ENCODE measurements at regions of chr1 and their contacts with region 1.

Region 1: DNA sequence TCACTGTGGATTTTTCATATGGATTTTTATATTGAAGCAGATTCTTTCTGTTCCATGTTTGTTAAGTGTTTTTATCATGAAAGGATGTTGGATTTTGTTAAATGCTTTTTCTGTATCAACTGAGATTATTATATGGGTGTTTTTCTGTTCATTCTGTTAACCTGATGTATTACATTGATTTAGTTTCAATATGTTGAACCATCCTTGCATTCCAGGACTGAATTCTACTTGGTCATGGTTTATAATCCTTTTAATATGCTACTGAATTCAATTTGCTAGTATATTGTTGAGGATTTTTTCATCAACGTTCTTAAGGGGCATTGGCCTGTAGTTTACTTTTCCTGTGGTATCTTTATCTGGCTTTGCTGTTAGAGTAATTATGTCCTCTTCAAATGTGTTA is 55.8 kb downstream of the CCDC30 start:
- DNase-seq: no peak
- H3K4me3 ChIP-seq: no peak overlapping the region
- H3K27ac ChIP-seq: no peak overlapping the region
- H3K4me1 ChIP-seq: no peaks in the 10 kb centered on the region
- H3K27me3 ChIP-seq: no peaks in the 10 kb centered on the region
- CTCF ChIP-seq: no peak
- EP300 ChIP-seq: no peak
- POLR2A ChIP-seq: no peak

Region 2: GRCh38 chr1:41222496-41222895 is 1296.4 kb before region 1 on chr1:
- in situ Hi-C with region 1: no loop called
- intact Hi-C with region 1: loop called (anchors 5 kb)
- DNase-seq: no peak
- H3K4me3 ChIP-seq: no peak overlapping the region
- H3K27ac ChIP-seq: no peak overlapping the region
- H3K4me1 ChIP-seq: peaks cover 0 to 24% (median 12%) of the 10 kb centered on the region in 4 donors
- H3K27me3 ChIP-seq: no peaks in the 10 kb centered on the region
- CTCF ChIP-seq: no peak
- EP300 ChIP-seq: no peak
- POLR2A ChIP-seq: no peak

Region 3: GRCh38 chr1:42240966-42241755 is 277.7 kb before region 1 on chr1:
- in situ Hi-C with region 1: no loop called
- intact Hi-C with region 1: no loop called
- DNase-seq: no peak
- H3K4me3 ChIP-seq: no peak overlapping the region
- H3K27ac ChIP-seq: no peak overlapping the region
- H3K4me1 ChIP-seq: peaks cover 0 to 3% (median 0%) of the 10 kb centered on the region in 4 donors
- H3K27me3 ChIP-seq: no peaks in the 10 kb centered on the region
- CTCF ChIP-seq: no peak
- EP300 ChIP-seq: no peak
- POLR2A ChIP-seq: no peak

Measured in transverse colon (tissue), 4 donors.